MCF 10A (cell line): ENCODE measurements at regions of chr6 and their contacts with region 1.

Region 1: DNA sequence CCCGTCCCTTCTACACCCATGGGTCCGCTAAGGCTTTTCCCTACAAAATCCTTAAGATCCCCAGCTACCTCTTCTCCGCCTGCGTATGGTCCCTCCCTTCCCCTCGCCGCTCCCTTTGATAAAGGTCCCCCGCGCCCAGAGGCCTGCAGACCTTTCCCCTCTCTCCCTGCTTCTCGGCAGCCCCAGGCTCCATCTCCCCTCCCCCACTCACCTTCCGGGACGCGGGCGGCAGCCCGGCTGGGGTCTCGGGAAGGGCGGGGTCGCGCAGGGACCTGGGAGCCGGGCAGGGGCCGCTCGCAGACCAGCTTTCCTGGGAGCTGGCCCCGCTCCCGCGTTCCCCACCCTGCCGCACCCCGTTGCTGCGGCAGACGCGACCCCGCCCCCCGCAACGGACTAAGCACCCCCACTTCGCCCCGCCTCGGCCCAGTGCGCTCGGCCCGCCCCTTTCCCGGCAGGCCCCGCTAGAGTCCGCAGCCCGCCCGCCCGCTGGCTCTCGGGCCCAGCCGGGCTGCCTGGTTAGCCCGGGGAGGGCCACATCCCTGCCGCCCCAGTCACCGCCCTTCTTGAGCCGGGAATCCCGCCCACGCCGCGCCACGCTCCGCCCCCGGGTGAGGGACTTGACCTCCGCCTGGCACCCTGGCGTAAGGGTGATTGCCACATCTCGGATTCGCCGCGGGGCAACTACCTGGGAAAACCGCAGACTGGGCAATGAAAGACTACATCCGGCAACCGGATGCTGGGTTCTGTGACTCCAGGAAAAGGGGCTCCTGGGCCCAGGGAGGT is at the start of gene FLOT1:
- DNase-seq: peak; percentile 99
- H3K4me3 Mint-ChIP-seq: peak within 1 kb of the TSS; percentile 91
- H3K27ac Mint-ChIP-seq: peak within 1 kb of the TSS; percentile 90
- H3K4me1 Mint-ChIP-seq: peaks cover 38% of the 10 kb centered on the region
- H3K27me3 Mint-ChIP-seq: no peaks in the 10 kb centered on the region
- CTCF ChIP-seq: no peak
- total RNA-seq, gene FLOT1: 61.8 and 73.7 TPM in 2 replicates

Region 2: GRCh38 chr6:29942275-29943052 is 800.0 kb before region 1 on chr6 and contains the start of gene HLA-A:
- CTCF ChIA-PET with region 1: no interaction called
- POLR2A ChIA-PET with region 1: no interaction called
- intact Hi-C with region 1: no loop called
- DNase-seq: peak; percentile 97
- H3K4me3 Mint-ChIP-seq: peak within 1 kb of the TSS; percentile 96
- H3K27ac Mint-ChIP-seq: peak within 1 kb of the TSS; percentile 100
- H3K4me1 Mint-ChIP-seq: peaks cover 12% of the 10 kb centered on the region
- H3K27me3 Mint-ChIP-seq: no peaks in the 10 kb centered on the region
- CTCF ChIP-seq: no peak
- total RNA-seq, gene HLA-A: 139 and 217 TPM in 2 replicates

Region 3: GRCh38 chr6:30730601-30731435 is 11.7 kb before region 1 on chr6:
- CTCF ChIA-PET with region 1: interaction called, 35 read pairs
- POLR2A ChIA-PET with region 1: interaction called, 6 read pairs
- intact Hi-C with region 1: no loop called
- DNase-seq: peak; percentile 91
- H3K4me3 Mint-ChIP-seq: no peak overlapping the region
- H3K27ac Mint-ChIP-seq: no peak overlapping the region
- H3K4me1 Mint-ChIP-seq: peaks cover 7% of the 10 kb centered on the region
- H3K27me3 Mint-ChIP-seq: no peaks in the 10 kb centered on the region
- CTCF ChIP-seq: peak; percentile 86

Region 4: DNA sequence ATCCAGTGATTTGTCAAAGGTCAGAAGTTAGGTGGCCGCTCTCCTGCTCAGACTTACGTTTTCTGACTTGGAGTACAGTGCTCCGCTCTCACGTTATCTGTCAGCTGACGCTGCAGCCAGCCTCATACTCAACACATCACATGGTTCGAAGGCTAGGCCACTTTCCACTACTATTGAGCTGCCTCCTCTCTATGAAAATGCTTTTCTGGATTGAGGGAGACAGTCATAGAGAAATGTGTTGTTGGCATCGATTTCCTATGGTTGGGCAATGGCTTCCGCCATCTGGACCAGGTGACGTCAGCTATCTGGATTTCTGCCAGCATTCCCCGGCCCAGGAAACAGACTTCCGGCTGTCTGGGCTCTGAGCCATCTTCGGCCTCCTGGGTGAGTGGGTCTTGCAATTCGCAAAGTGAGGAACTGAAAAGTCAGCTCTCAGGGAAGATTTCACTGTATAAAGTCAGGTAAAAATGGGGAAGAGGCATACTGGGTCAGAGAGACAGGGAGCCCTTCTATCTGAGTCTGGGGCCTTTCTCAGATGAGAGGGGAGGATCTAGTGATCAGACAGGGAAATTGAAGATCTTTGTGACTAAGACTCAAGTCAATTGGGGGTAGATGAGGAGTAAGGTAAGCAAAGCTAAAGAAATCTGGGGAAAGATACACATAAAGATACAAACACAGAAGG is 39.4 kb after region 1 on chr6:
- CTCF ChIA-PET with region 1: interaction called, 4 read pairs
- POLR2A ChIA-PET with region 1: interaction called, 90 read pairs
- intact Hi-C with region 1: loop called (anchors 1 kb)
- DNase-seq: peak; percentile 98
- H3K4me3 Mint-ChIP-seq: peak overlapping the region; percentile 42
- H3K27ac Mint-ChIP-seq: peak overlapping the region; percentile 91
- H3K4me1 Mint-ChIP-seq: peaks cover 57% of the 10 kb centered on the region
- H3K27me3 Mint-ChIP-seq: no peaks in the 10 kb centered on the region
- CTCF ChIP-seq: no peak

Region 5: DNA sequence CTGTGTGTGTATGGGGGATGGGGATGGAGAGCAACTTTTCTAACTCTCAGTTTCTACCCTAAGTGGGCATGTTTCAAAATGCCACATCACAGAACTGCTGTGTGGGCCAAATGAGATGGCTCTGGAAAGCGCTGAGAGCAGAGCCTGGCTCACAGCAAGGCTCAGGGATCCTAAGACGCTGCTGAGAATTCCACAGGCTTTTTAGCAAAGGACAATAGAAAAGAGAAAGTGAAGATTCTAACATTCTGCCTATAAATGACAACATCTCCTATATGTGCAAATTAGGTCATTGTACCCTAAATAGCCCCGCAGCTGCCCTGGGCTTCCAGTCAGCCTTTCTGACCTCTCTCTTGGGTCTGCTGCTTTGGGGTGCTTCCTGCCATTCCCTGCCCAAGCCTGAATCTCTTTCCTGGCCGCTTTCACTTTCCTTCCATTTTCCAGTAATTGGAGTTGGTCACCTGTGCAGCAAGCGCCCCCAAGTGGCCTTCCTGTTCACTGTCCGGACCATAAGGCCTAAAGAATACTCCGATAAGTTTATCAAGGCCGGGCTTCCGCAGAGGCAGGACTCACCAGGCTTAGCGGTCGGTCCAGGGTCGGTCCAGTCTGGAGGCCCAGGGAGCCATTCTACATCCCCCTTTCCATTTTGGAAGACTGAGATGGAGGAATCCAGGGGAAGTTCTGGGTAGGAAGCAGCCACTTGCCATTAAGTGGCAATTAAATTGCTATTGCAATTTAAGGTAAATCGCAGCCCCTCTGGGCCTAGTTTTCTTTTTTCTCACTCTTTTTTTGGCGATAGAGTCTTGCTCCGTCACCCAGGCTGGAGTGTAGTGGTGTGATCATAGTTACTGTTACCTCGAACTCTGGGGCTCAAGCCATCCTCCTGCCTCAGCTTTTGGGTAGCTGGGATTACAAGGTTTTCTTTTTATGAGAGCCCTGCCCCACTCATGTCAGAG is 135.2 kb after region 1 on chr6:
- CTCF ChIA-PET with region 1: interaction called, 7 read pairs
- POLR2A ChIA-PET with region 1: interaction called, 30 read pairs
- intact Hi-C with region 1: loop called (anchors 2 kb)
- DNase-seq: peak; percentile 93
- H3K4me3 Mint-ChIP-seq: peak overlapping the region; percentile 61
- H3K27ac Mint-ChIP-seq: peak overlapping the region; percentile 95
- H3K4me1 Mint-ChIP-seq: peaks cover 40% of the 10 kb centered on the region
- H3K27me3 Mint-ChIP-seq: no peaks in the 10 kb centered on the region
- CTCF ChIP-seq: peak; percentile 90